PC-9 (cell line): ENCODE measurements at regions of chrX and their contacts with region 1.

Region 1: GRCh38 chrX:103488332-103488731 is 31.0 kb downstream of the RAB40A start:
- DNase-seq: peak in 1 of 2 experiments; percentile 5
- H3K4me3 ChIP-seq: no peak overlapping the region
- H3K27ac ChIP-seq: no peak overlapping the region
- H3K4me1 ChIP-seq: no peaks in the 10 kb centered on the region
- H3K27me3 ChIP-seq: no peaks in the 10 kb centered on the region
- CTCF ChIP-seq: peak; percentile 56

Region 2: DNA sequence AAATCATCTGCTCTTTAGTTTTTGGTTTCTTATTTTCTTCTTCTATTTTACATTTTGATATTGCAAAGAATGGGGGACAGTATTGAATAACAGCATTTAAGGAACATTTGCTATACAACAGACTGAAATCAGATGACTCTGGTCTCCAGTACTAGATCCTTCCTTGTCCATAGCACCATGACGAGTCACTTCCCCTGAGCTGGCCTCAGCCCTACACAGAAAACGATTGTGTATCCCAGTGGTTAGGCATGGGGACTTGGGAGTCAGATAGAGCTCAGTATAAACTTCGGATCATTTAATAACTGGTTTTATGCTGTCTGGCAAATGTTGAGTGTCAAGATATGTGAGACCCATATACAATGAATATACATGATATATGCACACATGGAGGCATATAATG is 318.1 kb before region 1 on chrX:
- CTCF ChIA-PET with region 1: no interaction called
- POLR2A ChIA-PET with region 1: no interaction called
- intact Hi-C with region 1: no loop called
- DNase-seq: no peak
- H3K4me3 ChIP-seq: no peak overlapping the region
- H3K27ac ChIP-seq: no peak overlapping the region
- H3K4me1 ChIP-seq: no peaks in the 10 kb centered on the region
- H3K27me3 ChIP-seq: no peaks in the 10 kb centered on the region
- CTCF ChIP-seq: no peak

Region 3: GRCh38 chrX:103446665-103447302 is 41.5 kb before region 1 on chrX:
- CTCF ChIA-PET with region 1: no interaction called
- POLR2A ChIA-PET with region 1: no interaction called
- intact Hi-C with region 1: no loop called
- DNase-seq: peak in 1 of 2 experiments; percentile 7
- H3K4me3 ChIP-seq: no peak overlapping the region
- H3K27ac ChIP-seq: no peak overlapping the region
- H3K4me1 ChIP-seq: no peaks in the 10 kb centered on the region
- H3K27me3 ChIP-seq: no peaks in the 10 kb centered on the region
- CTCF ChIP-seq: no peak

Region 4: GRCh38 chrX:103817502-103817901 is 329.2 kb after region 1 on chrX:
- CTCF ChIA-PET with region 1: no interaction called
- POLR2A ChIA-PET with region 1: no interaction called
- intact Hi-C with region 1: loop called (anchors 2 kb)
- DNase-seq: peak; percentile 12 to 51
- H3K4me3 ChIP-seq: no peak overlapping the region
- H3K27ac ChIP-seq: no peak overlapping the region
- H3K4me1 ChIP-seq: no peaks in the 10 kb centered on the region
- H3K27me3 ChIP-seq: no peaks in the 10 kb centered on the region
- CTCF ChIP-seq: peak; percentile 76